ENCODE measurements at regions of chr13 and their contacts with region 1.

Region 1: DNA sequence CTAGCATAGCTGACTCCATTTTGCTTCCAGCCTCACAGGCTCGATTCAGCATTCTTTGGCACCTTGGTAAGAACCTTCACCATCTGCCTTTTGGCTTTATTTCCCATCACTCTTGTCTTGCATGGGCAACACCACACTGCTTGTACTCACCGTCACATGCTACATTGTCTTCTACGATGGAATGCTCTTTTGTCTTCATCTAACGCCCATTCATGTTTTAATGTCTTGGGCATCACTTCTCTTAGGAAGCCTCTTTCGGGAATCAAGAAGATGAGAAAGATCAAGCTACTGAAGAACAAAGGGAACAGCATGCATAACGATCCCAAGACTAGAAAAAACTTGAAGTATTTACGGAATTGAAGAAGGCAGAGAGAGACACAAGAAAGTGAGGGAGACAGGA is 5.7 kb upstream of the RPL21 start:
- DNase-seq: no peak
- H3K4me3 ChIP-seq: no peak overlapping the region
- H3K27ac ChIP-seq: no peak overlapping the region
- H3K4me1 ChIP-seq: peaks cover 2 to 24% (median 9%) of the 10 kb centered on the region in 6 donors
- H3K27me3 ChIP-seq: no peaks in the 10 kb centered on the region
- CTCF ChIP-seq: no peak
- POLR2A ChIP-seq: no peak

Region 2: GRCh38 chr13:27168906-27169657 is 76.5 kb before region 1 on chr13:
- intact Hi-C with region 1: loop called (anchors 5 kb)
- DNase-seq: no peak
- H3K4me3 ChIP-seq: peak overlapping the region in 2 of 8 donors; percentile 71 to 85
- H3K27ac ChIP-seq: peak overlapping the region in 2 of 8 donors; percentile 95 to 99
- H3K4me1 ChIP-seq: peaks cover 29 to 86% (median 60%) of the 10 kb centered on the region in 6 donors
- H3K27me3 ChIP-seq: no peaks in the 10 kb centered on the region
- CTCF ChIP-seq: no peak
- POLR2A ChIP-seq: no peak

Measured in spleen (tissue), 13 donors.